ENCODE measurements at regions of chr19 and their contacts with region 1.

Region 1: GRCh38 chr19:47124937-47125668 is 5.5 kb upstream of the SAE1 start:
- DNase-seq: no peak
- ATAC-seq: peak; percentile 69 to 89 (median 76)
- H3K4me3 ChIP-seq: no peak overlapping the region
- H3K27ac ChIP-seq: no peak overlapping the region
- H3K4me1 ChIP-seq: peaks cover 3% of the 10 kb centered on the region
- H3K27me3 ChIP-seq: no peaks in the 10 kb centered on the region
- CTCF ChIP-seq: peak; percentile 76

Region 2: GRCh38 chr19:47075179-47075810 is 49.8 kb before region 1 on chr19:
- intact Hi-C with region 1: loop called in 1 of 2 experiments (anchors 1 kb)
- DNase-seq: no peak
- ATAC-seq: no peak
- H3K4me3 ChIP-seq: no peak overlapping the region
- H3K27ac ChIP-seq: no peak overlapping the region
- H3K4me1 ChIP-seq: peaks cover 8% of the 10 kb centered on the region
- H3K27me3 ChIP-seq: no peaks in the 10 kb centered on the region
- CTCF ChIP-seq: no peak

Measured in psoas muscle (tissue), 8 donors.